ENCODE measurements at regions of chr4 and their contacts with region 1.

Region 1: DNA sequence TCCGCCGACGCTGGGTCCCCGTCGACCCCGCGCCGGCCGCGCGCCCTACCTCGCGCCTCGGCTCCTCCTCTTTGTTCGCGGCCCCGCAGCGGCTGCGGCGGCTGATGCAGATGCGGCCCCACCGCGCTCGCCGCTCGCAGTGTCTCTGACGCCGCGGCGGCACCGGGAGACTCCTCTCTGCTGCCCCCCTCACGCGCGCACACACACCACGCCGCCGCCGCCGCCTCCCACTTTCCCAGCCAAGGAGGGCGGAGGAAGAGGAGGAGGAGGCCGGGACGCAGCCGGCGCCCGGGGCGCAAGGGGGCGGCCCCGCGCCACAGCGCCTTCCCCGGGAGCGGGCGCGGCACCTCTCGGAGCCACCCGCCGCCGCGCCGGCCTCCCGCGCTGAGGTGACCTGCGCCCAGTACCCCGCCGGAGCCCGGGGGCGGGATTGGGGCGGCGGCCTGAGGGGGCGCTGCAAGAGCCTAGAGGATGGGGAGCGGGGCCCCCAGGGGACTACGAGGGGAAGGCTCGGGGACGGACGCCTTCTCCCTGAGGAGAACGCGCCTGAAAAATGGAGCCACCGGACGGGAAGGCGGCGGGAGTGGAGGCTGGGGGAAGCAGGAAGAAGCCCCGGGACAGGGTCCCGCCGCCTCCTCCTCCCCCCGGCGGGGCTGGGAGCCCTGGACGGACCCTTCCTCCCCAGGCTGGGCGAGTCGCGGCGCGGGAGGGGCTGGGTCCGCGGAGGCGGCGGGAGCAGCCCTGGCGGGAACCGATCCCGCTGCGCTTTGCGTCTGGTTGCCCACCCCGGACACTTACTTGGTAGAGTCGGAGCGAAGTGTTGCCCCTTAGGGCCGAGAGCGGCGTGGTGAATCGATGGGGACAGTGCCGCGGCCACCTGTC is at the start of gene SH3RF1:
- DNase-seq: peak; percentile 85
- CTCF ChIP-seq: peak; percentile 20

Region 2: DNA sequence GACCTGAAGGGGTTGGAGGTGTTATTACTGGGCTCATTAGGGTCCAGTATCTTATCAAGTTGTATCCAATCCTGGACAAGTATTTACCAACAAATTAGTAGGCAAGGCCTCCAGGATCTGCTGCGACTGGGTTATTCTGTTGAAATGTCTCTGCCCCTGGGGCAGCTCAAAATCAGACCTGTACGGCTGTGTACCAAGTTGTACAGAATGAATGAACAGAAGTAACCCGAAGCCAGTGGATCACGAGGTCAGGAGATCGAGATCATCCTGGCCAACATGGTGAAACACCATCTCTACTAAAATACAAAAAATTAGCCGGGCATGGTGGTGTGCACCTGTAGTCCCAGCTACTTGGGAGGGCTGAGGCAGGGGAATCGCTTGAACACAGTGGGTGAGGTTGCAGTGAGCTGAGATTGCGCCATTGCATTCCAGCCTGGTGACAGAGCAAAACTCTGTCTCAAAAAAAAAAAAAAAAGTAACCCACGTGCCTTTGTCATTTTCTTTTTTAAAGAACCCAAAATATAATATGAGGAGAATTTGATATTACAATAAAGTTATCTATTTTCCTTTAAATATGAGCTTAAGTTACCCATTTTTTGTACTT is 388.3 kb before region 1 on chr4:
- CTCF ChIA-PET with region 1: no interaction called
- POLR2A ChIA-PET with region 1: no interaction called
- DNase-seq: no peak
- CTCF ChIP-seq: no peak

Region 3: GRCh38 chr4:169245061-169245460 is 26.0 kb before region 1 on chr4:
- CTCF ChIA-PET with region 1: interaction called, 21 read pairs
- POLR2A ChIA-PET with region 1: interaction called, 4 read pairs
- DNase-seq: no peak
- CTCF ChIP-seq: no peak

Region 4: GRCh38 chr4:169254546-169254983 is 16.5 kb before region 1 on chr4:
- CTCF ChIA-PET with region 1: interaction called, 49 read pairs
- POLR2A ChIA-PET with region 1: interaction called, 3 read pairs
- DNase-seq: no peak
- CTCF ChIP-seq: no peak

Measured in GM10248 (cell line).